ENCODE measurements at regions of chr1 and their contacts with region 1.

Region 1: DNA sequence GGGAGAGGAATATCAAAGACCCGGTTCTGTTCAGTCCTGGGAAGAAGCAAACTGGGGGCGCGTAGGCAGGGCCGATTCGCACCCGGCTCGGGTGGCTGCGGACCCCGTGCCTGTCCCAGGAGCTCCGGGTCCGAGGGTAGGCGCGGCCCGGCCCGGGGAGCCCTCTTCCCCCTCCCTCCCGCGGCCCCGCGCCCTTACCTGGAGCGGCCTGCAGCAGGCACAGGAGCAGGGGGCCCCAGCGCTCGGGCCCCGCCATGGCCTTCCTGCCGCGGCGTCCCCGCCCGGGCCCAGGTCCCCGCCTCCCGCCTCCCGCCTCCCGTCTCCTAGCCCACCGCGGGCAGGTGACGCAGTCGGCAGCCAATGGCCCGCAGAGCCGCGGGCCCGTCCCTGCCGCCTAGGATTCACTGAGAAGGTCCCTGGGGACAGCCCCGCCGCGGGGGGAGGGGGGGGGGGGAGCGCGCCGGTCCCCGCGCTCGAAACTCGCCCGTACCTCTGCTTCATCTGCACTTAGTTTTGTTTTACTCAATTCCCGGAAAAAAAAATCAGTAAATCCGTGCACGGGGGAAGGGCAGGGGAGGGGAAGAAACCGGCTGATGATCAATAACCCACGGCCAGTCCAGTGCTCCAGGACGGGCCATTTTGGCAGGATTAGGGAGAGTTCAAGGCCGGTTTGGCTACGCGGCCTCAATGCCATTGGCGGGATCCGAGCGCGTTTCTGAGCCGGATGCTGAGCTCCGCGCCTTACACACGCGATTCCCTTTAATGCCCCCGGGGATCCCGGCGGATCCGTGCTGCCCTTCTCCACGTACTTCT is at the start of gene IFNLR1:
- DNase-seq: peak; percentile 61
- H3K4me3 ChIP-seq: peak within 1 kb of the TSS; percentile 62
- H3K27ac ChIP-seq: peak within 1 kb of the TSS; percentile 56
- H3K4me1 ChIP-seq: no peaks in the 10 kb centered on the region
- H3K27me3 ChIP-seq: no peaks in the 10 kb centered on the region
- CTCF ChIP-seq: no peak
- total RNA-seq, gene IFNLR1: 1.4 and 2.0 TPM in 2 replicates

Region 2: DNA sequence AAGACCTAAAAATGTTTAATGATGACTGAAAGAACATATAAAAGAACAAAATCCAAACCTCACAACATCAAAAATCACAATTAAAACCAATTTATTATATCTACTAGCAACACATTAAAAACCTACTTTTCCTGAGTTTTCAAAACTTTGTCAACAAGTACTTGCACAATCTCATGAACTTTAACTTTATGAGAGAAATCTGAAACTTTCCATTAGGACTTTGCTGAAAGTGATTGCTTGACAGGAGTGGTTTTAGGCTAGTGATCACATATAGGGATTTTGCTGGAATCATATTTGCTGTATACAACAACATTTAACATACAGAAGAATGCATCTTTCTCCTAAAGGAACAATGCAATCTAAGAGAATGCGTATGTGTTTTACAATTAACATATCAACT is 856.4 kb before region 1 on chr1:
- CTCF ChIA-PET with region 1: no interaction called
- POLR2A ChIA-PET with region 1: no interaction called
- intact Hi-C with region 1: no loop called
- DNase-seq: no peak
- H3K4me3 ChIP-seq: no peak overlapping the region
- H3K27ac ChIP-seq: no peak overlapping the region
- H3K4me1 ChIP-seq: no peaks in the 10 kb centered on the region
- H3K27me3 ChIP-seq: no peaks in the 10 kb centered on the region
- CTCF ChIP-seq: no peak

Region 3: DNA sequence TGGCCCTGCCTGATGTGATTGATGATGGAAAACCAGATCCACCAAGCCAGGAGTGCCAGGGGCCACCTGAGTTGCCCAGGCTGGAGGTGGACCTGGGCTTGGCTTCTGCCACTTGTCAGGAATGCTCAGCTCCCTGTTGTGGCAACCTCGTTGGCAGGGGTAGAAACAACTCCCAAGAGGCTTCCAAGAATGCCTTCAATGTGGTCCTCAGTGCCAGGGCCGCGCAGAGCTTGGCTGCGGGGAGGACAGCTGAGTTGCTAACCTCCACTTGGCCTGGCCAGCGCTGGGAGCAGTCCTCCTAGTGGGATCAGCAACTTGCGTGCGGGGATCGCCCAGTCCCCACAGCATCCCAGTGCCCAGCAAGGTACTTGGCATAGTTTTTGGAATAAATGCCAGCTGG is 84.2 kb before region 1 on chr1:
- CTCF ChIA-PET with region 1: interaction called, 11 read pairs
- POLR2A ChIA-PET with region 1: no interaction called
- intact Hi-C with region 1: no loop called
- DNase-seq: no peak
- H3K4me3 ChIP-seq: no peak overlapping the region
- H3K27ac ChIP-seq: no peak overlapping the region
- H3K4me1 ChIP-seq: peaks cover 4% of the 10 kb centered on the region
- H3K27me3 ChIP-seq: no peaks in the 10 kb centered on the region
- CTCF ChIP-seq: no peak

Region 4: GRCh38 chr1:24301785-24302175 is 114.6 kb after region 1 on chr1:
- CTCF ChIA-PET with region 1: no interaction called
- POLR2A ChIA-PET with region 1: interaction called, 18 read pairs
- intact Hi-C with region 1: no loop called
- DNase-seq: peak; percentile 70
- H3K4me3 ChIP-seq: no peak overlapping the region
- H3K27ac ChIP-seq: peak overlapping the region; percentile 5
- H3K4me1 ChIP-seq: peaks cover 15% of the 10 kb centered on the region
- H3K27me3 ChIP-seq: no peaks in the 10 kb centered on the region
- CTCF ChIP-seq: no peak

Measured in A673 (cell line).